AG04450 (cell line): ENCODE measurements at regions of chr12 and their contacts with region 1.

Region 1: DNA sequence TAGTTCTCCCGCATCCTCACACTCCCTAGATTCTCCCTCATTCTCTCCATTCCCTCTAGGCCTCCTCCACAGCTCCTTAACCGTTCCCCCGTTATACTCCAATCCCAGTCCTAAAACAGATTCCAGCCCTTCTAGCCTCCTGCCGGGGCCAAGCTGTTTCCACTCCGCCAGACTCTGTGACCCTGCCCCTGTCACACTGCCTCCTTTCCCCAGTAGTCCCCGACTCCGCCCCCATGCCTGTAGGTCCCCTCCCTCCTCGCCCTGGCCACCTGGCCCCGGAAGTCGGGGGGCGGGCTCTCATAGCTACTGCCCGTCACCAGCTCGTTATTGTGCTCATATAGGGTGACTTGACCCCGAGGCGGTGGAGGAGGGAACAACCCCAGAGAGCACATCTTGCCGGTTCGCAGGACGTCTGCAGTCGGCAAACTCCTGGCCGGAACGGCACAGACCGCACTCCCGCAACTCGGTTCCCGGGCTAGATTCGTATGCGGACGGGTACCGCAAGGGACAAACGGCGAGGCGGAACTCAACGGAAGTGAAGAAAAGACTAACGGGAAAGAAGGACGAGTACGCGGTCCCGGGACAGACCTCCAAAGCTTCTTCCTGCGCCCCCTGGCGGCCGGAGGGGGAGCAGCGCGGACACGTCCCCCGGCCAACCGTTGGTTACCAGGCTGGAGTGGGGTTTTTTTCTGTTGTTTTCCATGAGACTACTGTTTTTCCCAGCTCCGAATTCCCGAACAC is at the start of gene AAAS:
- DNase-seq: peak; percentile 84
- H3K4me3 ChIP-seq: peak within 1 kb of the TSS; percentile 98
- H3K27ac ChIP-seq: peak within 1 kb of the TSS; percentile 94
- H3K27me3 ChIP-seq: no peaks in the 10 kb centered on the region
- CTCF ChIP-seq: peak; percentile 99
- polyA plus RNA-seq, gene AAAS: 40.0 and 46.7 TPM in 2 replicates

Region 2: DNA sequence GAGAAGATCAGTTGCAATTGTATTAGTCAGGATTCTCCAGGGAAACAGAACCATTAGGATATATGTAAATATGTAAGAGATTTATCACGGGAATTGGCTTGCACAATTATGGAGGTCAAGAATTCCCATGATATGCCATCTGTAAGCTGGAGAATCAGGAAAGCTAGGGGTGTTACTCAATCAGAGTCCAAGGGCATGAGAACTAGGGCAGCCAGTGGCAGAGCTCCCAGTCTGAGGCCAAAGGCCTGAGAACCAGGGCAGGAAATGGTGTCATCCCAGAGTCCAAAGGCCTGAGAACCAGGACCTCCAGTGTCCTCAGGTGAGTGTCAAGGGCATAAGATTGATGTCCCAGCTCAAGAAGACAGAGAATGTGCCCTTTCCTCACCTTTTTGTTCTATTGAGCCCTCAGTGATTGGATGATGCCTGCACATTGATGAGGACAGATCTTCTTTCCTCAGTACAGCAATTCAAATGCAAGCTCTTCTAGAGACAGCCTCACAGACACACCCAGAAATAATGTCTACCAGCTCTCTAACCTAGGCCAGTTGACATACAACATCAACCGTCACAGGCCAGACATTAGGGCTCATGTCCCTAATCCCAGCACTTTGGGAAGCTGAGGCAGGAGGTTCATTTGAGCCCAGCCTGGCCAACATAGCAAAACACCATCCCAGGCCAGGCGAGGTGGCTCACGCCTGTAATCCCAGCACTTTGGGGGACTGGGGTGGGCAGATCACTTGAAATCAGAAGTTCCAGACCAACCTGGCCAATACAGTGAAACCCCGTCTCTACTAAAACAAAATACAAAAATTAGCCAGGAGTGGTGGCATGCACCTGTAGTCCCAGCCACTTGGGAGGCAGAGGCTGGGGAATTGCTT is 175.6 kb before region 1 on chr12:
- CTCF ChIA-PET with region 1: interaction called, 10 read pairs
- POLR2A ChIA-PET with region 1: no interaction called
- DNase-seq: no peak
- H3K4me3 ChIP-seq: no peak overlapping the region
- H3K27ac ChIP-seq: no peak overlapping the region
- H3K27me3 ChIP-seq: no peaks in the 10 kb centered on the region
- CTCF ChIP-seq: no peak

Region 3: GRCh38 chr12:53213348-53213747 is 107.9 kb before region 1 on chr12:
- CTCF ChIA-PET with region 1: interaction called, 137 read pairs
- POLR2A ChIA-PET with region 1: interaction called, 7 read pairs
- DNase-seq: no peak
- H3K4me3 ChIP-seq: no peak overlapping the region
- H3K27ac ChIP-seq: no peak overlapping the region
- H3K27me3 ChIP-seq: no peaks in the 10 kb centered on the region
- CTCF ChIP-seq: peak; percentile 92

Region 4: GRCh38 chr12:53295070-53295890 is 26.0 kb before region 1 on chr12 and contains the start of gene PFDN5:
- CTCF ChIA-PET with region 1: interaction called, 80 read pairs
- POLR2A ChIA-PET with region 1: interaction called, 9 read pairs
- DNase-seq: peak; percentile 73
- H3K4me3 ChIP-seq: peak within 1 kb of the TSS; percentile 99
- H3K27ac ChIP-seq: peak within 1 kb of the TSS; percentile 73
- H3K27me3 ChIP-seq: no peaks in the 10 kb centered on the region
- CTCF ChIP-seq: peak; percentile 11; the same call in 1 of the 2 replicates
- polyA plus RNA-seq, gene PFDN5: 970 and 991 TPM in 2 replicates

Region 5: DNA sequence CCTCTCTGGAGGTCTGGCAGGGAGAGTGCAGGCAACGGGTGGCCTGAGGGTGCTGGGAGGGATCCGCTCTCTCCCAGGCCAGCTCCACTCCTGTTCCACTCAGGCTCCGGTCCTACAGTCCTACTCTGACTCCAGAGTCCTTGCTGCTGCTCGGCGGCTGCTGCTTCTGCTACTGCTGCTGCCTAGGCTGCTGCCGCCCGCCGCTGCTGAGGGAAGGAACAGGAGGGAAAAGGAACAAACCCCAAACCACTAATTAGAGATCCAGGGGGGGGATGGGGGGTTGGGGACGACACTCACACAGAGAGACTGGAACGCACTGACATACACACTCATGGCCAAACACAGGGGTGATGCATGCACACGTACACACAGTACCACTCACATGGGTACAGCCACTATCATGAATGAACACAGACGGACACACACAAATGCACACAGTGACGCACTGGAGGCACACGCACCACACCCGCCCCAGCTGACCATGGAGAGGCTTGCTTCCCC is 15.0 kb after region 1 on chr12 and contains the start of gene SP7:
- CTCF ChIA-PET with region 1: interaction called, 14 read pairs
- POLR2A ChIA-PET with region 1: interaction called, 3 read pairs
- DNase-seq: no peak
- H3K4me3 ChIP-seq: no peak within 1 kb of the TSS
- H3K27ac ChIP-seq: no peak within 1 kb of the TSS
- H3K27me3 ChIP-seq: peaks cover 66% of the 10 kb centered on the region
- CTCF ChIP-seq: no peak
- polyA plus RNA-seq, gene SP7: not detected in 2 replicates

Region 6: GRCh38 chr12:53379389-53380103 is 58.3 kb after region 1 on chr12:
- CTCF ChIA-PET with region 1: interaction called, 20 read pairs
- POLR2A ChIA-PET with region 1: interaction called, 9 read pairs
- DNase-seq: peak; percentile 100
- H3K4me3 ChIP-seq: peak overlapping the region; percentile 68
- H3K27ac ChIP-seq: peak overlapping the region; percentile 81
- H3K27me3 ChIP-seq: no peaks in the 10 kb centered on the region
- CTCF ChIP-seq: no peak